Heart right ventricle (tissue), 16 donors: ENCODE measurements at regions of chr16 and their contacts with region 1.

Region 1: DNA sequence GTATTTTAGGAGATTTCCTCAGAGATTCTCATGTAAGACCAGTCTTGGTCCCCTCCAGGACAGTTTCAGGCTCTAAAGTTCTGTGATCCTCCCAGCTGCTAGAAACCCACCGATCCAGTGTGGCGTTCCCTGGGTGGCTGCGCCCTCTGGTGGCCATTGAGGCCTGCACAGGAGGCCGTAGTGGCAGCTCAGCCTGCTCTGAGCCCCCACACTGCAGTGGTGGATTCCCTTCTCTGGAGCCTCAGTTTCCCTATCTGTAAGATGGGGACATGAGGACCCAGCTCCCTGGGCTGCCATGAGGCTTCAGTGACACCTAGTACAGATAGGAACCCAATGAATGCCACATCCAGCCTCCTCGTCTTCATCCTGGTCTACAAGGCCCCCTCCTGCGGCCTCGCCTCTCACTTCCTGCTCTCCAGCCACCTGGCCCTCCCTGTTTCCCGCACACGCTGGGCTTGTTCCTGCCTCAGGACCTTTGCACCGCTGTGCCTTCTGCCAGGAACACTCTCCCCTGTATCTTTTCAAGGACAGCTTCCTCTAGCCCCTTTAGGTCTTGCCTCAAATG is 16.5 kb downstream of the CCDC102A start:
- DNase-seq: peak; percentile 79 to 85
- ATAC-seq: peak; percentile 65 to 89 (median 80)
- H3K4me3 ChIP-seq: no peak overlapping the region
- H3K27ac ChIP-seq: no peak overlapping the region
- H3K4me1 ChIP-seq: peaks cover 0 to 19% (median 5%) of the 10 kb centered on the region in 9 donors
- H3K27me3 ChIP-seq: no peaks in the 10 kb centered on the region
- CTCF ChIP-seq: peak; percentile 93 to 99 (median 98)

Region 2: GRCh38 chr16:57413301-57413730 is 106.6 kb before region 1 on chr16:
- intact Hi-C with region 1: loop called in 6 of 10 experiments (anchors 2 to 5 kb)
- DNase-seq: no peak
- ATAC-seq: no peak
- H3K4me3 ChIP-seq: no peak overlapping the region
- H3K27ac ChIP-seq: no peak overlapping the region
- H3K4me1 ChIP-seq: peaks cover 11 to 51% (median 41%) of the 10 kb centered on the region in 9 donors
- H3K27me3 ChIP-seq: no peaks in the 10 kb centered on the region
- CTCF ChIP-seq: no peak

Region 3: GRCh38 chr16:57422026-57422944 is 97.6 kb before region 1 on chr16:
- intact Hi-C with region 1: loop called (anchors 1 to 5 kb)
- DNase-seq: peak in 1 of 2 donors; percentile 57
- ATAC-seq: peak in 4 of 8 donors; percentile 36 to 65 (median 48)
- H3K4me3 ChIP-seq: no peak overlapping the region
- H3K27ac ChIP-seq: peak overlapping the region in 1 of 10 donors; percentile 41
- H3K4me1 ChIP-seq: peaks cover 8 to 51% (median 37%) of the 10 kb centered on the region in 9 donors
- H3K27me3 ChIP-seq: no peaks in the 10 kb centered on the region
- CTCF ChIP-seq: peak; percentile 15 to 82 (median 70)

Region 4: DNA sequence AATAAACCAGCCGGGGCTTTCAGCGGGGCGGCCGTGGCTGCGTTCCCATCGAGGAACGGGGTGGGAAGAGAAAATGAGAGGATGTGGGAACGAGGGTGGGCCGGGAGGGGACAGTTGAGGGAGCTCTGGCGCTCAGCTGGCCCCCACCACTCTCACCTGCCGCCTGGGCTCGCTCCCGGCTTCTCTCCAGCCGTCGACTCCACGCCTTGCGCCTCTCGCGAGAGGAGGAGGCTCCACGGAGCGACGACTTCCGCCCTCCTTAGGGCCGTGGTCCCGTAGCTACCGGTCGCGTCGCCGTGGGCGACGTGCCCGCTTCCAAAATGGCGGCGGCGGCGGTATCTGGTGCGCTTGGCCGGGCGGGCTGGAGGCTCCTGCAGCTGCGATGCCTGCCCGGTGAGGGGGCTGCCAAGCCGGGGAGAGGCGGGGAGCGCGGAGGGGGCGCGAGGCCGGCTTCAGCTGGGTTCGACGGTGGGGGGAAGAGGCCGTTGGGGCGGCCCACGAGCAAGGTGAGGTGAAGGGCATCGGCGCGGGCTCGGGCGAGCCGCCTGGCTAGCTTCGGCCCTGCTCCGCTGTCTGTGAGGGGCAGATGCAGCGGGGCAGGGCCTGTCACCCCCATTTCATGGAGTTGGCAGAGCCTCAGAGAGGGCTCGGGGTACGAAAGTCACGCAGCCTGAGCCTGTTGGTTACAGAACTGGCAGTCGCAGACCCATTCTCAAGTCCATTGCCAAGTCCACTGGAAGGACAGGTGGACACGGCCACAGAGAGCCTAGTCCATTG is 72.5 kb before region 1 on chr16 and contains the starts of genes CIAPIN1 and COQ9:
- intact Hi-C with region 1: loop called in 1 of 10 experiments (anchors 10 kb)
- DNase-seq: peak; percentile 95 to 96
- ATAC-seq: peak; percentile 98 to 100 (median 99)
- H3K4me3 ChIP-seq: peak within 1 kb of the TSS; percentile 73 to 96 (median 92)
- H3K27ac ChIP-seq: peak within 1 kb of the TSS; percentile 89 to 98 (median 94)
- H3K4me1 ChIP-seq: peaks cover 2 to 60% (median 36%) of the 10 kb centered on the region in 9 donors
- H3K27me3 ChIP-seq: no peaks in the 10 kb centered on the region
- CTCF ChIP-seq: no peak
- total RNA-seq, gene CIAPIN1: 49.6 to 75.1 (median 61.0) TPM
- total RNA-seq, gene COQ9: 135 to 230 (median 207) TPM

Region 5: GRCh38 chr16:57462209-57462977 is 57.5 kb before region 1 on chr16 and contains the start of gene POLR2C:
- intact Hi-C with region 1: loop called in 6 of 10 experiments (anchors 2 to 10 kb)
- DNase-seq: peak; percentile 89 to 91
- ATAC-seq: peak; percentile 81 to 95 (median 92)
- H3K4me3 ChIP-seq: peak within 1 kb of the TSS; percentile 69 to 99 (median 88)
- H3K27ac ChIP-seq: peak within 1 kb of the TSS; percentile 70 to 90 (median 87)
- H3K4me1 ChIP-seq: peaks cover 7 to 29% (median 21%) of the 10 kb centered on the region in 9 donors
- H3K27me3 ChIP-seq: no peaks in the 10 kb centered on the region
- CTCF ChIP-seq: peak; percentile 92 to 99 (median 95)
- total RNA-seq, gene POLR2C: 40.2 to 56.7 (median 47.2) TPM

Region 6: DNA sequence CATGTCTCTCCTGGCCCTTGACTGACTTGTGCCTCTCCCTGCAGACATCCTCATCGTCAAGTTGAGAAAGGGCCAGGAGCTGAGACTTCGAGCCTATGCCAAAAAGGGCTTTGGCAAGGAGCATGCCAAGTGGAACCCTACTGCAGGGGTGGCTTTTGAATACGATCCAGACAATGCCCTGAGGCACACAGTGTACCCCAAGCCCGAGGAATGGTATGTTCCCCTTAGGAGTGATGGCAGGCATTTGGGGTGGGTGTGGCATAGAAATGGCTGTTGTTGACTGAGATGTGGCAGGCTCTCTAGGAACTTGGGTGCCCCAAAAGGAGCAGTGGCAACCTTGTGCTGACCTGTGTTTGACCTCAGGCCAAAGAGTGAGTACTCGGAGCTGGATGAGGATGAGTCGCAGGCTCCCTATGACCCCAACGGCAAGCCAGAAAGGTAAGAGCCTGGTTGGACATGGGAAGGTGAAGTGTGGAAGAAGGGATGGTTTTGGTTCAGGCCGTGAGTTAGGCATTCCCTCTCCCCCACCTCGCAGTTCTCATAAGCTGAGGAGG is 49.9 kb before region 1 on chr16:
- intact Hi-C with region 1: loop called in 7 of 10 experiments (anchors 2 to 10 kb)
- DNase-seq: no peak
- ATAC-seq: peak in 2 of 8 donors; percentile 21 to 40
- H3K4me3 ChIP-seq: no peak overlapping the region
- H3K27ac ChIP-seq: peak overlapping the region in 3 of 10 donors; percentile 27 to 53 (median 33)
- H3K4me1 ChIP-seq: peaks cover 10 to 32% (median 18%) of the 10 kb centered on the region in 9 donors
- H3K27me3 ChIP-seq: no peaks in the 10 kb centered on the region
- CTCF ChIP-seq: no peak

Region 7: DNA sequence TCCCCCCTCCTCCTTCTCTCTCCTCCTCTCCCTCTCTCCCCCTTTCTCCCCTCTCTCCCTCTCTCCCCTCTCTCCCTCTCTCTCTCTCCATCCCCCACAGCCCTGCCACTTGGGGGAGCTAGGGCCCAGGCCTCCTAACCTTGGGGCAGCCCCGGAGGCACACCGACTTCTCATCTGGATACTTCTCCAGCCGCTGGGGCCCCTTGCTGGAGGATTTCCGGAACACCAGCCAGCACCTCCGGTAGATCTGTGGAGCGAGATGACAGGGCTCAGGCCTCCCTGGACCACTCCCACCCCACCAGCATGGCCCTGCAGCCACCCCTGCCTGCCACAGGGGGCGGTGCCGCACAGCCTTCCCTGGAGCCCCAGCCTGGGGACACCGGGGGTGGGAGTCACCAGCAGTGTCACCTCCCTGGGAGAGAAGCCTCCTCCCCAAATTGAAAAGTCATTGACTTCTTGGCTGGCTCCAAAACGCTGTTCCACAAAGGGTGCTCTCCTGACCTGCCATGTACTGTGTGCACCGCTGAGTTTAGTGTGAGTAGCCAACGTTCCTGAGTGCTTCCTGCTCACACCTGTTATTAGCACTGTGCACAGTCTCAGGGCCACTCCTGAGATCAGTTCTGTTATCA is 44.1 kb before region 1 on chr16:
- intact Hi-C with region 1: loop called in 5 of 10 experiments (anchors 5 kb)
- DNase-seq: no peak
- ATAC-seq: peak in 6 of 8 donors; percentile 24 to 55 (median 36)
- H3K4me3 ChIP-seq: no peak overlapping the region
- H3K27ac ChIP-seq: peak overlapping the region in 1 of 10 donors; percentile 36
- H3K4me1 ChIP-seq: peaks cover 19 to 65% (median 49%) of the 10 kb centered on the region in 9 donors
- H3K27me3 ChIP-seq: peaks cover 0 to 11% (median 0%) of the 10 kb centered on the region in 7 donors
- CTCF ChIP-seq: peak; percentile 35 to 77 (median 61)

Region 8: GRCh38 chr16:57600048-57600835 is 80.4 kb after region 1 on chr16:
- intact Hi-C with region 1: no loop called
- DNase-seq: peak; percentile 45 to 52
- ATAC-seq: peak; percentile 58 to 94 (median 86)
- H3K4me3 ChIP-seq: no peak overlapping the region
- H3K27ac ChIP-seq: peak overlapping the region in 1 of 10 donors; percentile 75
- H3K4me1 ChIP-seq: peaks cover 0 to 36% (median 0%) of the 10 kb centered on the region in 9 donors
- H3K27me3 ChIP-seq: peaks cover 0 to 28% (median 0%) of the 10 kb centered on the region in 7 donors
- CTCF ChIP-seq: peak; percentile 52 to 80 (median 72)